CD8-positive, alpha-beta T cell (primary cell): ENCODE measurements at regions of chr4 and their contacts with region 1.

Region 1: DNA sequence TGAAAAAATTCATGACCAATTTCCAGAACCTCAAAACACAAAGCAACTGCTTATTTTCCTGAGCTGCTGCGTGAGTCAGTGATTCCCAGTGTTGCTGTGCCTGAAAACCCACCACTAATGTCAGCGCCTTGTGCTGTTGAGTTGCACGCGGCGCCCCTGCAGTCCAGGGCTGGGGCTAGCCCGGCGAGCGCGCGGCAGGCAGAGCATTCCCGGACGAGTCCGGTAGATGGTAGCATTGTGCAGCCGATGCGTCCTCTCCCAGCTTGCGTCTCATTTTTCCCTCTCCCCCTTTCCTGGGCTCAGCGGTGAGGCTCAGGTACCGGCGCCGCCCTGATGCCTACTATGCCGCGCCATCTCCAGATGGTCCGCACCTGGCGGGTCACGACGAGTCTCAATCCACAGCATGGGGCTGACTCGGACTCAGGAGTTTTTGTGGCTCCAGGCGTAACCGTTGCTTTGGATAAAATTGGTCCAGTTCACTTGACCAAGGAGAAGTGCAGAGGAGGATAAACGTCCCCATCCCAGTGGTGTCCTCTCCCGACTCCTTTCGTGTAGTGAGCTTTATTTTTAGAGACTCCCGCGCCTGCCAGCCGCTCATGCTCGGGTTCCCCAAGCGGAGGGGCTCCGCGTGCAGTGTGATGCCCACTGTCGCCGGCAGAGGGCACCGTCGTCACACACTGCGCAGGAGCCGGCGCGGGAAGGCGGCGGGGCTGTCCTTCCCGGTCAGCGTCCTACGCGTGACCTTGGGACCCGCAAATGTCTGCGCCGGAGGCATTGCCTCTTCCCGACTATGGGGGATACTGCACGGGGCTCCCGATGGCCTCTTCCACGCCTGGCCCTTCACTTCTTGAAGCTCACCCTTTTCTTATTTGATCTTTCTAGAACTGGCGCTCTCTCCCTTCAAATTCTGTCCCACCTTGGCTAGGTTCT is 53.6 kb upstream of the IGFBP7 start:
- DNase-seq: peak; percentile 36 to 78 (median 67)
- ATAC-seq: peak; percentile 91
- H3K4me3 ChIP-seq: peak overlapping the region; percentile 69 to 73
- H3K4me3 Mint-ChIP-seq: peak overlapping the region; percentile 86
- H3K27ac ChIP-seq: no peak overlapping the region
- H3K27ac Mint-ChIP-seq: no peak overlapping the region
- H3K4me1 ChIP-seq: no peaks in the 10 kb centered on the region
- H3K4me1 Mint-ChIP-seq: peaks cover 12% of the 10 kb centered on the region
- H3K27me3 ChIP-seq: no peaks in the 10 kb centered on the region
- H3K27me3 Mint-ChIP-seq: peaks cover 27% of the 10 kb centered on the region
- CTCF ChIP-seq: peak; percentile 73

Region 2: GRCh38 chr4:57147335-57148060 is 16.3 kb before region 1 on chr4:
- CTCF ChIA-PET with region 1: interaction called, 28 read pairs
- POLR2A ChIA-PET with region 1: no interaction called
- intact Hi-C with region 1: no loop called
- DNase-seq: no peak
- ATAC-seq: no peak
- H3K4me3 ChIP-seq: no peak overlapping the region
- H3K4me3 Mint-ChIP-seq: no peak overlapping the region
- H3K27ac ChIP-seq: no peak overlapping the region
- H3K27ac Mint-ChIP-seq: no peak overlapping the region
- H3K4me1 ChIP-seq: no peaks in the 10 kb centered on the region
- H3K4me1 Mint-ChIP-seq: no peaks in the 10 kb centered on the region
- H3K27me3 ChIP-seq: peaks cover 0 to 3% of the 10 kb centered on the region in 2 experiments
- H3K27me3 Mint-ChIP-seq: peaks cover 3% of the 10 kb centered on the region
- CTCF ChIP-seq: no peak

Region 3: GRCh38 chr4:57182132-57182874 is 18.5 kb after region 1 on chr4:
- CTCF ChIA-PET with region 1: interaction called, 29 read pairs
- POLR2A ChIA-PET with region 1: no interaction called
- intact Hi-C with region 1: no loop called
- DNase-seq: no peak
- ATAC-seq: no peak
- H3K4me3 ChIP-seq: no peak overlapping the region
- H3K4me3 Mint-ChIP-seq: no peak overlapping the region
- H3K27ac ChIP-seq: no peak overlapping the region
- H3K27ac Mint-ChIP-seq: no peak overlapping the region
- H3K4me1 ChIP-seq: no peaks in the 10 kb centered on the region
- H3K4me1 Mint-ChIP-seq: no peaks in the 10 kb centered on the region
- H3K27me3 ChIP-seq: no peaks in the 10 kb centered on the region
- H3K27me3 Mint-ChIP-seq: peaks cover 8% of the 10 kb centered on the region
- CTCF ChIP-seq: no peak